ENCODE measurements at regions of chr13 and their contacts with region 1.

Region 1: DNA sequence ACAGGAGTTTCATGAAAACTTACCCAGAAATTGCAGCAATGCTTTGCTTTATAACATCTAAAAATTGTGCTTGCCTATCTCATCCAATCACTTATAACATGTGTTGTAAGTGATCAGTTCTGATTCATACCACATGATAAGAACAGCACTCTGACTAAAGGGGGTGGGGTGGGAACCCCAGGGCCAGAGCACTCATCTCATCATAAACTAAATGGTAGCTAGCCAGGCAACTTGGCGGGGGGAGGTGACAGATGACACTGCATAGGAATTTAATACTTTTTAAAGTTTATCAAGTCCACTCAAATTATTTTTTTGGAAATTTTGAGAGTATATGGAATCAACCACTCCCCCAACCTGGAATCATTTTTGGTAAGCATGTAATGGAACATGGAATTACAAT is 42.1 kb downstream of the FOXO1 start:
- DNase-seq: peak; percentile 72
- H3K4me3 Mint-ChIP-seq: no peak overlapping the region
- H3K27ac Mint-ChIP-seq: peak overlapping the region; percentile 44
- H3K4me1 Mint-ChIP-seq: peaks cover 72% of the 10 kb centered on the region
- H3K27me3 Mint-ChIP-seq: no peaks in the 10 kb centered on the region

Region 2: GRCh38 chr13:40578055-40578454 is 46.3 kb before region 1 on chr13:
- CTCF ChIA-PET with region 1: no interaction called
- POLR2A ChIA-PET with region 1: no interaction called
- intact Hi-C with region 1: no loop called
- DNase-seq: no peak
- H3K4me3 Mint-ChIP-seq: no peak overlapping the region
- H3K27ac Mint-ChIP-seq: peak overlapping the region; percentile 19
- H3K4me1 Mint-ChIP-seq: peaks cover 95% of the 10 kb centered on the region
- H3K27me3 Mint-ChIP-seq: no peaks in the 10 kb centered on the region

Region 3: DNA sequence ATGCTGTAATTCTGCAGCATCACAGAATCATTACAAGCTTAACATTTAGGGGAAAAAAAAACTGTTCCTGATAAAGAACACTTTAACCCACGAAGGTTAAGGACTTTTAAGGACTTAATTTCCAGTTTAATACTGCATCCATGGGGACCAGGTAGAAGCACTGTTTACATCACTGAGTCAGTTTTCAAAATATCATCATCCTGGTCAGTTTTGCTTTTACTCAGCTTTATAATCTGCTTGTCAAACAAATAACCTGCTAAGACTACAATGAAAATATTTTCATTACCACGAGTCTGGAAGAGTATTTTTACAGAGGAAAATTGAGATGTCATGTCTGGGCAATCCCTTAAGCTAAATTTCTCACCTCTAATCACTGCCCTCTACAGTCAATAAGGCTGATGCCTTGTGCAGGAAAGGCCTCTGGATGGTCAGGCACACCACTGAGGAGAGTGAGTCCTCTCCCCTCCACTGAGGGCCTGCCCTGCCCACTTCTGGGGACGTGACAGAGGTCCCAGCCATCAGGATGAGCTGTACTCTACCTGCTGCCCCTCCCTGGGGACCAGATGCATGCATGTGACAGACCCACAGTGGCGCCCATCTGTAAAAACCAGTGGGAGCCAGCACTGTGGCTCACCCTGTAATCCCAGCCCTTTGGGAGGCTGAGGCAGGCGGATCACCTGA is 11.1 kb after region 1 on chr13:
- CTCF ChIA-PET with region 1: no interaction called
- POLR2A ChIA-PET with region 1: interaction called, 3 read pairs
- intact Hi-C with region 1: loop called (anchors 1 kb)
- DNase-seq: no peak
- H3K4me3 Mint-ChIP-seq: no peak overlapping the region
- H3K27ac Mint-ChIP-seq: peak overlapping the region; percentile 18
- H3K4me1 Mint-ChIP-seq: peaks cover 87% of the 10 kb centered on the region
- H3K27me3 Mint-ChIP-seq: no peaks in the 10 kb centered on the region

Region 4: DNA sequence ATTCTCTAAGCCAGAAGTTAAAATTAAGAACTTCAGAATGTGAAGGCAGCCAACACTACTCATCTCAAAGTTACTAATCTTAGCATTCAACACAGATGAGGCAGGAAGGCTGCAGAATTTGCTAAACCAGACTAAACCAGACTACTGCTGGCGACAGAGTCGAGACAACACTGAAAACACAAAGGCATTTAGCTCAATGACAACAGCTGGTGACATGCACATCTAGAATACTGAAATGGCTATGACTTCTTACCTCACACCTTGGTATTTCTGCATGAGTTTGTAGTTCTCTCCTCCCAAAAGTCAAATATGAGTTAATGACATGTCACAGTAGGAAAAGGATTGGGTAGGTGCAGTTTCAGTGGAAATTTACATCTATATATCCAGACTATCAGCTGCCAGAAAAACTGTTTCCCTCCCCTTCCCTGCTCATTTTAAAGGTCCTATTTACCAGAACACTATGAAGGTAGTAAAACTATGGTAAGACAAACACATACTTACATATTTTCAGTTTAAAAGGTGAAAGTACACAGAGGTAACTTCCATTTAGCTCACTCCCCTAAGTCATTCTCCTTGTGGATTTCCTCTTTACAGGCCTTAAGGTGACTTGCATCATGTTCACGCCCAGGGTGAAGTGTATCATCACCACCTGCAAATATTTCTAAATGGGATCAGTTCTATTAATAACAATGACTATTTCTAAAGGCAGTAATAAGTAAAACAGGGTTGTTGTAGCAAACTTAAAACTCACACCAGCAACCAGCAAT is 20.6 kb after region 1 on chr13:
- CTCF ChIA-PET with region 1: no interaction called
- POLR2A ChIA-PET with region 1: no interaction called
- intact Hi-C with region 1: loop called (anchors 2 kb)
- DNase-seq: peak; percentile 60
- H3K4me3 Mint-ChIP-seq: no peak overlapping the region
- H3K27ac Mint-ChIP-seq: peak overlapping the region; percentile 87
- H3K4me1 Mint-ChIP-seq: peaks cover 96% of the 10 kb centered on the region
- H3K27me3 Mint-ChIP-seq: no peaks in the 10 kb centered on the region

Region 5: DNA sequence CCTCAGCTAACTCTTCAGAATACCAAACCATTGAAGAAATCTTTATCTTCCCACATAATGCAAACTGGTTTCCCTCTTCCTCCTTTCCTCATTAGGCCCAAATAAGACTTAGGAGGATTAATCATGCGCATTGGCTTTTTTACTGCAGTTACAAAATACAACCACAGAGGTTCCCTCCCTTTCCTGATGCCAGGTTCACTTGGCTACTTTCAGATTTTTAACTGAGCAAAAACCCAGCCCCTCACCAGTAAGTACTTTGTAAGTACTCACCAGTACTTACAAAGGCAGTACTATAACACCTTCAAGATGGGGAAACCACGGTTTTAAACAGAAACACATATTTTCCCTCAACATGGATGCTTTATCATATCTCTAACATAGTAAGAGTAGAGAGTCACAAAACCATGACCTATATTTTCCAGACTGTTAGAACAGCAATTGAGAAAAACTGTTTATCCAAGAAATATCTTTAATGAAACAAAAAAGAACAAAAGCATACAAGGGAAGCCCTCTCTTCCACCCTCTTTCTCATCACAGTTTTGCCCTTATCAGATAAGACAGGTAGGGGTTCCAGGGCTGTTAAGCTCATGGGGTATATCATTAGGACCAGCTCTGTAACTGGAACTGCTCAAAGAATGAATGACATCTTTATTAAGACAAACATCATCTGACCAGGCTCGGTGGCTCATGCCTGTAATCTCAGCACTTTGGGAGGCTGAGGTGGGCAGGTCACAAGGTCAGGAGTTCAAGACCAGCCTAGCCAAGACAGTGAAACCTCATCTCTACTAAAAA is 29.3 kb after region 1 on chr13:
- CTCF ChIA-PET with region 1: no interaction called
- POLR2A ChIA-PET with region 1: no interaction called
- intact Hi-C with region 1: loop called (anchors 2 kb)
- DNase-seq: peak; percentile 43
- H3K4me3 Mint-ChIP-seq: peak overlapping the region; percentile 70
- H3K27ac Mint-ChIP-seq: peak overlapping the region; percentile 89
- H3K4me1 Mint-ChIP-seq: peaks cover 90% of the 10 kb centered on the region
- H3K27me3 Mint-ChIP-seq: no peaks in the 10 kb centered on the region

Region 6: GRCh38 chr13:40789275-40790133 is 165.1 kb after region 1 on chr13 and contains the start of gene SLC25A15:
- CTCF ChIA-PET with region 1: no interaction called
- POLR2A ChIA-PET with region 1: no interaction called
- intact Hi-C with region 1: no loop called
- DNase-seq: peak; percentile 80
- H3K4me3 Mint-ChIP-seq: peak within 1 kb of the TSS; percentile 77
- H3K27ac Mint-ChIP-seq: peak within 1 kb of the TSS; percentile 67
- H3K4me1 Mint-ChIP-seq: peaks cover 31% of the 10 kb centered on the region
- H3K27me3 Mint-ChIP-seq: no peaks in the 10 kb centered on the region
- total RNA-seq, gene SLC25A15: 16.2 to 16.9 TPM

Region 7: GRCh38 chr13:41196620-41197019 is 572.2 kb after region 1 on chr13:
- CTCF ChIA-PET with region 1: no interaction called
- POLR2A ChIA-PET with region 1: no interaction called
- intact Hi-C with region 1: no loop called
- DNase-seq: no peak
- H3K4me3 Mint-ChIP-seq: no peak overlapping the region
- H3K27ac Mint-ChIP-seq: no peak overlapping the region
- H3K4me1 Mint-ChIP-seq: peaks cover 37% of the 10 kb centered on the region
- H3K27me3 Mint-ChIP-seq: no peaks in the 10 kb centered on the region

Measured in activated CD4-positive, alpha-beta memory T cell treated with anti-CD3 and anti-CD28 coated beads for 36 hours (primary cell).